ENCODE measurements at regions of chr1 and their contacts with region 1.

Region 1: GRCh38 chr1:168567007-168567406 is 9.4 kb upstream of the XCL1 start:
- DNase-seq: no peak
- H3K4me3 ChIP-seq: no peak overlapping the region
- H3K27ac ChIP-seq: no peak overlapping the region
- H3K4me1 ChIP-seq: no peaks in the 10 kb centered on the region
- H3K27me3 ChIP-seq: no peaks in the 10 kb centered on the region
- CTCF ChIP-seq: no peak

Region 2: GRCh38 chr1:168439456-168440375 is 127.3 kb before region 1 on chr1:
- intact Hi-C with region 1: loop called (anchors 10 kb)
- DNase-seq: peak; percentile 80 to 94 (median 86)
- H3K4me3 ChIP-seq: peak overlapping the region in 2 of 3 donors; percentile 23 to 48
- H3K27ac ChIP-seq: no peak overlapping the region
- H3K4me1 ChIP-seq: peaks cover 0 to 5% (median 0%) of the 10 kb centered on the region in 3 donors
- H3K27me3 ChIP-seq: no peaks in the 10 kb centered on the region
- CTCF ChIP-seq: peak; percentile 86